Ovary (tissue), 10 donors: ENCODE measurements at regions of chr1 and their contacts with region 1.

Region 1: GRCh38 chr1:21882669-21883415 is 54.3 kb downstream of the HSPG2 start:
- DNase-seq: no peak
- H3K4me3 ChIP-seq: no peak overlapping the region
- H3K27ac ChIP-seq: no peak overlapping the region
- H3K4me1 ChIP-seq: no peaks in the 10 kb centered on the region
- H3K27me3 ChIP-seq: no peaks in the 10 kb centered on the region
- CTCF ChIP-seq: no peak
- EP300 ChIP-seq: no peak
- POLR2A ChIP-seq: no peak

Region 2: GRCh38 chr1:20847611-20848080 is 1035.2 kb before region 1 on chr1:
- intact Hi-C with region 1: loop called in 1 of 4 experiments (anchors 10 kb)
- DNase-seq: no peak
- H3K4me3 ChIP-seq: no peak overlapping the region
- H3K27ac ChIP-seq: no peak overlapping the region
- H3K4me1 ChIP-seq: no peaks in the 10 kb centered on the region
- H3K27me3 ChIP-seq: no peaks in the 10 kb centered on the region
- CTCF ChIP-seq: no peak
- EP300 ChIP-seq: no peak
- POLR2A ChIP-seq: no peak

Region 3: GRCh38 chr1:21693732-21694131 is 189.1 kb before region 1 on chr1:
- intact Hi-C with region 1: no loop called
- DNase-seq: no peak
- H3K4me3 ChIP-seq: no peak overlapping the region
- H3K27ac ChIP-seq: no peak overlapping the region
- H3K4me1 ChIP-seq: no peaks in the 10 kb centered on the region
- H3K27me3 ChIP-seq: no peaks in the 10 kb centered on the region
- CTCF ChIP-seq: no peak
- EP300 ChIP-seq: no peak
- POLR2A ChIP-seq: no peak

Region 4: DNA sequence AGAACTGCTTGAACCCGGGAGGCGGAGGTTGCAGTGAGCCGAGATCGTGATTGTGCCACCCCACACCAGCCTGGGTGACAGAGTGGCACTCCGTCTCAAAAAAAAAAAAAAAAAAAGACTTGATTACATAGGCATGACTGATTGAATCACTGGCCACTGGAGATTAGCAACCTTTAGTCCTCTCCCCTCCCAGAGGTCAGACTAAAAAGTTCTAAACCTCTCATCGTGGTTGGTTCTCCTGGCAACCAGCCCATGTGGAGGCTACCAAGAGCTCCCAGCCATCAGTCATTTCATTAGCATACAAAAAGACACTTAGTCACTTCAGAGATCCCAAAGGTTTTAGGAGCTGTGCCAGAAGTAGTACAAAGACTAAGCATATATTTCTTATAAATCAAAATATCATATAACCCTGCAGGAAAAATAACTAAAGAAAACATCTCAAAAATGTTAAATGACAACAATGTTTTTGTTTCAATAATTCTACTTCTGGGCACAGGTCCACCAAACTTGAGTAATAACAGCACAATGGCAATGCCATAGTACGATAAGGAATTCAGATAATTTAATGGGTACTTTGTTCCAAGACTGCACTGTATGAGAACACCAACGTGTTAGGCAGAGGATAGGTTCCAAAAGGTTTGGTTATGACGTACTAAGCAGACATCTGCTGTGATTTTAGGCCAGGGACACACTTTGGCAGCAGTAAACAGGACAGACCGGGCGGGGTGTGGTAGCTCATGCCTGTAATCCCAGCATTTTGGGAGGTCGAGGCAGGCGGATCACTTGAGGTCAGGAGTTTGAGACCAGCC is 118.0 kb before region 1 on chr1:
- intact Hi-C with region 1: no loop called
- DNase-seq: peak in 1 of 5 donors; percentile 27
- H3K4me3 ChIP-seq: no peak overlapping the region
- H3K27ac ChIP-seq: no peak overlapping the region
- H3K4me1 ChIP-seq: peaks cover 17% of the 10 kb centered on the region
- H3K27me3 ChIP-seq: no peaks in the 10 kb centered on the region
- CTCF ChIP-seq: no peak
- EP300 ChIP-seq: no peak
- POLR2A ChIP-seq: no peak

Region 5: GRCh38 chr1:22275721-22276395 is 393.0 kb after region 1 on chr1:
- intact Hi-C with region 1: no loop called
- DNase-seq: peak; percentile 55 to 77 (median 63)
- H3K4me3 ChIP-seq: no peak overlapping the region
- H3K27ac ChIP-seq: no peak overlapping the region
- H3K4me1 ChIP-seq: peaks cover 2% of the 10 kb centered on the region
- H3K27me3 ChIP-seq: no peaks in the 10 kb centered on the region
- CTCF ChIP-seq: peak; percentile 51 to 71 (median 55)
- EP300 ChIP-seq: no peak
- POLR2A ChIP-seq: no peak